ENCODE measurements at regions of chr6 and their contacts with region 1.

Region 1: DNA sequence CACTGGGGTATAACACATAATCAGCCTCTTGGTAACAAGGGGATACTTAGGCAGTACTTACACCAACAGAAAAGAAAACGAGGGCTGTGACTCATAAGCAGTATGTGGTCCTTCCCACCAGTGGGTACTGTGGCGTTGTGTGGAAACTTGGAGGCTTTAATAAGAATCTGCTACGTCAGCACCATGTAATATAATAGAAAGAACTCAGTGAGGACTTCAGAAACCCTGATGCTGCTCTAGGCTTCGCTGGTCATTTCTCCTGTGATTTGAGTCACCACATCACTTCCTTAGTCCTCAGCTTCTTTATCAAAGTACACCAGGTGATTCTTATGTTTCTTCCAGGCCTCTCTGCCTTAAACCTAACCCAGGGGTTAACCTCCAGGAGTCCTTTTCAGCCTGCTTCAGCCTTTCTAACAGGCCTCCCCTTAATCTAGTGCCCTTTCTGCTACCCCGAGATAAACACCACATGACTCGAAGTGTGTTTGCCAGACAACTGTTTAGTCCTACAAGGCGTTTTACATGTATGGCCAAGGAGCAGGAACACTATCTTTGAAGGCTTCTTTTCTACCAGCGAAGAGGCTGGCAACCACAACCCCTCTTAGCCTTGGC is 68.5 kb downstream of the FYN start:
- DNase-seq: peak; percentile 84
- ATAC-seq: peak; percentile 77
- H3K4me3 ChIP-seq: no peak overlapping the region
- H3K27ac ChIP-seq: peak overlapping the region; percentile 70
- H3K4me1 ChIP-seq: peaks cover 70% of the 10 kb centered on the region
- H3K27me3 ChIP-seq: no peaks in the 10 kb centered on the region
- CTCF ChIP-seq: peak in 2 of 3 experiments; percentile 24 to 35; a peak in 2 of 6 replicates
- EP300 ChIP-seq: peak; percentile 65 to 88; a peak in 2 of 4 replicates
- POLR2A ChIP-seq: no peak
- RAD21 ChIP-seq: peak; percentile 62

Region 2: GRCh38 chr6:111700135-111700690 is 104.5 kb before region 1 on chr6:
- CTCF ChIA-PET with region 1: no interaction called
- POLR2A ChIA-PET with region 1: no interaction called
- RAD21 ChIA-PET with region 1: no interaction called
- SMC1A ChIA-PET with region 1: no interaction called
- in situ Hi-C with region 1: no loop called
- intact Hi-C with region 1: no loop called
- DNase-seq: no peak
- ATAC-seq: no peak; the same call in 2 of the 3 replicates
- H3K4me3 ChIP-seq: no peak overlapping the region
- H3K27ac ChIP-seq: no peak overlapping the region
- H3K4me1 ChIP-seq: no peaks in the 10 kb centered on the region
- H3K27me3 ChIP-seq: no peaks in the 10 kb centered on the region
- CTCF ChIP-seq: no peak
- EP300 ChIP-seq: no peak
- POLR2A ChIP-seq: no peak
- RAD21 ChIP-seq: no peak

Region 3: DNA sequence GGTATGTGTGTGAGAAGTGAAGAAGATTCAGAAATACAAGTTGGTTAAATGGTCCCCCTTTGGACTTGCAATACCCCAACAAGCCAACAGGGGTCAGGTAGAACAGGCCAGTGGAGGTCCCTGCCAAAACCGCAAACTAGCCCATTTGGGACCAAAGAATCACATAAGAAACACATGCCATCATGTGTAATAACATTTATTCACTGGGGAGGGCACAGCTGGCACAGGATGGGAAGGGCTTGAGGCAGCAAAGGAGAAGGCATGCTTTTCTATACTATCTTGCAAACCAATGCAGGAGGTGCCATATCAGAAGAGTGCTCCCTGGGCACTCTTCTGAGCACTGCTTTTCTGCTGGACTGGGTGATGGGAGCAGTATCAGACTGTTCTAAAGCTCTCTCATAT is 83.0 kb before region 1 on chr6:
- CTCF ChIA-PET with region 1: interaction called, 6 read pairs
- POLR2A ChIA-PET with region 1: interaction called, 3 read pairs
- RAD21 ChIA-PET with region 1: interaction called, 7 read pairs
- SMC1A ChIA-PET with region 1: interaction called, 30 read pairs
- in situ Hi-C with region 1: no loop called
- intact Hi-C with region 1: no loop called
- DNase-seq: no peak
- ATAC-seq: peak; percentile 28
- H3K4me3 ChIP-seq: no peak overlapping the region
- H3K27ac ChIP-seq: no peak overlapping the region
- H3K4me1 ChIP-seq: peaks cover 40% of the 10 kb centered on the region
- H3K27me3 ChIP-seq: no peaks in the 10 kb centered on the region
- CTCF ChIP-seq: peak; percentile 50 to 68 (median 67)
- EP300 ChIP-seq: no peak
- POLR2A ChIP-seq: no peak
- RAD21 ChIP-seq: peak; percentile 75

Region 4: GRCh38 chr6:111769365-111770152 is 35.2 kb before region 1 on chr6:
- CTCF ChIA-PET with region 1: interaction called, 22 read pairs
- POLR2A ChIA-PET with region 1: interaction called, 6 read pairs
- RAD21 ChIA-PET with region 1: interaction called, 56 read pairs
- SMC1A ChIA-PET with region 1: interaction called, 66 read pairs
- in situ Hi-C with region 1: no loop called
- intact Hi-C with region 1: loop called (anchors 1 kb)
- DNase-seq: no peak
- ATAC-seq: no peak
- H3K4me3 ChIP-seq: no peak overlapping the region
- H3K27ac ChIP-seq: peak overlapping the region; percentile 93
- H3K4me1 ChIP-seq: peaks cover 57% of the 10 kb centered on the region
- H3K27me3 ChIP-seq: no peaks in the 10 kb centered on the region
- CTCF ChIP-seq: no peak
- EP300 ChIP-seq: no peak
- POLR2A ChIP-seq: no peak
- RAD21 ChIP-seq: no peak

Region 5: GRCh38 chr6:111793711-111794111 is 11.0 kb before region 1 on chr6:
- CTCF ChIA-PET with region 1: interaction called, 6 read pairs
- POLR2A ChIA-PET with region 1: interaction called, 13 read pairs
- RAD21 ChIA-PET with region 1: interaction called, 22 read pairs
- SMC1A ChIA-PET with region 1: interaction called, 71 read pairs
- in situ Hi-C with region 1: no loop called
- intact Hi-C with region 1: loop called (anchors 1 kb)
- DNase-seq: no peak
- ATAC-seq: peak; percentile 82
- H3K4me3 ChIP-seq: peak overlapping the region; percentile 66
- H3K27ac ChIP-seq: peak overlapping the region; percentile 85
- H3K4me1 ChIP-seq: peaks cover 36% of the 10 kb centered on the region
- H3K27me3 ChIP-seq: no peaks in the 10 kb centered on the region
- CTCF ChIP-seq: no peak
- EP300 ChIP-seq: no peak
- POLR2A ChIP-seq: peak; percentile 56
- RAD21 ChIP-seq: no peak

Region 6: GRCh38 chr6:111832833-111833418 is 28.2 kb after region 1 on chr6:
- CTCF ChIA-PET with region 1: interaction called, 10 read pairs
- POLR2A ChIA-PET with region 1: interaction called, 7 read pairs
- RAD21 ChIA-PET with region 1: interaction called, 5 read pairs
- SMC1A ChIA-PET with region 1: interaction called, 71 read pairs
- in situ Hi-C with region 1: no loop called
- intact Hi-C with region 1: loop called (anchors 1 kb)
- DNase-seq: no peak
- ATAC-seq: peak; percentile 50
- H3K4me3 ChIP-seq: no peak overlapping the region
- H3K27ac ChIP-seq: peak overlapping the region; percentile 50; the same call in 1 of the 2 replicates
- H3K4me1 ChIP-seq: peaks cover 29% of the 10 kb centered on the region
- H3K27me3 ChIP-seq: no peaks in the 10 kb centered on the region
- CTCF ChIP-seq: no peak
- EP300 ChIP-seq: peak in 1 of 2 experiments; percentile 29; a peak in 1 of 4 replicates
- POLR2A ChIP-seq: no peak
- RAD21 ChIP-seq: no peak

Region 7: GRCh38 chr6:111866857-111867256 is 62.1 kb after region 1 on chr6:
- CTCF ChIA-PET with region 1: interaction called, 6 read pairs
- POLR2A ChIA-PET with region 1: interaction called, 8 read pairs
- RAD21 ChIA-PET with region 1: interaction called, 12 read pairs
- SMC1A ChIA-PET with region 1: interaction called, 65 read pairs
- in situ Hi-C with region 1: no loop called
- intact Hi-C with region 1: loop called (anchors 2 kb)
- DNase-seq: no peak
- ATAC-seq: no peak
- H3K4me3 ChIP-seq: peak overlapping the region; percentile 10; the same call in 1 of the 2 replicates
- H3K27ac ChIP-seq: no peak overlapping the region
- H3K4me1 ChIP-seq: peaks cover 16% of the 10 kb centered on the region
- H3K27me3 ChIP-seq: no peaks in the 10 kb centered on the region
- CTCF ChIP-seq: no peak
- EP300 ChIP-seq: no peak
- POLR2A ChIP-seq: no peak
- RAD21 ChIP-seq: no peak